Ovary (tissue), 10 donors: ENCODE measurements at regions of chr4 and their contacts with region 1.

Region 1: DNA sequence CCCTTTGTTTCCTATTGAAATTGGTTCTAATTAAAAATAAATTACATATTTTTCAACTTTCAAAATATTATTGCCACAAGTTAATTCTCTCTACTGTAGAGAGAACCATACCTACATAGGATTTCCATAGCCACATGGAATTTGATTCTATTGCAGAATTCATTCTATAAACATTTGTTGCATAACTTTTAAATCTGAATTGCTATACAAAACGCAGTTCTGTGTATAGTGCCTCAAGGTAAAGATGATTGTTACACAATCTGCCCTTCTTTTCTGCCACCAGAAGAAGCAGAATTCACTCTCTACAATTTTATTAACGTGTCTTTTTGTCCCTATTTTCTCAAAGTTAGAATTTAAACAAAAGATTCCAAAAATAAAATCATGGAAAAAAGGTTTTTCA is 673.4 kb downstream of the C4orf33 start:
- DNase-seq: no peak
- H3K4me3 ChIP-seq: no peak overlapping the region
- H3K27ac ChIP-seq: no peak overlapping the region
- H3K4me1 ChIP-seq: no peaks in the 10 kb centered on the region
- H3K27me3 ChIP-seq: no peaks in the 10 kb centered on the region
- CTCF ChIP-seq: no peak
- EP300 ChIP-seq: no peak
- POLR2A ChIP-seq: no peak

Region 2: DNA sequence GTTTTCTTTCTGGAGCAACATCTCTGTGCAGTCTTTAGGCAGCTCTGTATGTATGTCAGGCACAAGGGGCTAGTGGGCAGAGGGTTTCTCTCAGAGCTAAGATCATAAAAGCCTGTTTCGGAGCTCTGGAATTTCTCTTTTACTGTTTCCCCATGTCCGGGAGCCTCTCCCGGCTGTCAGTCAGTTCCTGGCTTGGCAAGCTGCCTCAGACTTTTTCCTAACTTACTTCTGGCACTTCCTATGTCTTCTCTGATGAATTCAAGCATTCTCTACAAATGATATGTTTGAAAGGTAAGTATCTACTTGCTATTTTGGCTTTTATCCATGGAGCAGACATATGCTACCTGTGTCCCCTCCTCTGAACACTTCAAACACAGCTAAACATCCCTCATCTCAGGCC is 1352.4 kb before region 1 on chr4:
- intact Hi-C with region 1: loop called in 1 of 4 experiments (anchors 5 kb)
- DNase-seq: no peak
- H3K4me3 ChIP-seq: no peak overlapping the region
- H3K27ac ChIP-seq: no peak overlapping the region
- H3K4me1 ChIP-seq: no peaks in the 10 kb centered on the region
- H3K27me3 ChIP-seq: no peaks in the 10 kb centered on the region
- CTCF ChIP-seq: no peak
- EP300 ChIP-seq: no peak
- POLR2A ChIP-seq: no peak

Region 3: GRCh38 chr4:129903861-129904260 is 134.5 kb after region 1 on chr4:
- intact Hi-C with region 1: no loop called
- DNase-seq: no peak
- H3K4me3 ChIP-seq: no peak overlapping the region
- H3K27ac ChIP-seq: no peak overlapping the region
- H3K4me1 ChIP-seq: no peaks in the 10 kb centered on the region
- H3K27me3 ChIP-seq: no peaks in the 10 kb centered on the region
- CTCF ChIP-seq: no peak
- EP300 ChIP-seq: no peak
- POLR2A ChIP-seq: no peak